Aorta (tissue), 5 donors: ENCODE measurements at regions of chr17 and their contacts with region 1.

Region 1: DNA sequence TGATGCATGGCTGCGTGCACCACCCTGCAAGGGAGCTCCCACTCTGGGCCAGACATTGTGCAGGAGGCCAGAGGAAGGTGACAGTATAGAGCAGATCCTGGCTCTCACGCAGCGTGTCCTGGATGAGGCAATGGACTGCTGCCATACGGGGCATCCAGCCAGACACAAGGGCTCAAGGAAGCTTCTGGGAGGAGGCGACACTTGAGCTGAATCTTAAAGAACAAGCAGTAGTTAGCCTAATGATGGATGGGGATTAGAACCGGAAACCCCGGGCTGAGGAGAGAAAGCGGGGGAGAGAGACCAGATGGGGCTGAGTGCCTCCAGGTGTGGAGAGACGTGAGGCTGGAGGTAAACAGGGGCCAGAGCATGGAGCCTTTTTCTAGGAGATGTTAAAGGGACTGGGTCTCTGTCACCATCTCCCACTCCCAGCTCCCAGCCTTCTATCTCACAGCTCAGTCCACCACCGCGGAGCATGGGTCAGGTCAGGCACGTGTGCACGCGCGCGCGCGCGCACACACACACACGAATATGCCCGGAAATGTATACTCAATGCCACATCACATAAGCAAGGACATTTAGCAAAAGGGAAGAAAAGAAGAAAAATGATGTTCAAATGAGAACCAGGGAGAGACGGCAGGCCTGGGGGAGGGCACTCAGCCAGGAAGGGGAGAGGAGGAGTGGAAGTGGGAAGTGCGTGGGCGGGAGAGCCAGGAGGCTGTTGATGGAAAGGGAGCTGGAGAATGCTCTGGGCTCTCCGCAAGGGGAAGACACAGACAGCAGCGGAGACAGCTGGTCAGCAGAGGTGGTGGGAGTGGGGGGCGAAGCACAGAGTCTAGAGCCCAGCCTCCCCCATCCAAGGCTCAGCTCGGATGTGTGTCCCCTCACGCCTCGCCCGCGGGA is 46.2 kb downstream of the CCDC42 start:
- DNase-seq: peak; percentile 85 to 92
- ATAC-seq: peak; percentile 62
- H3K4me3 ChIP-seq: no peak overlapping the region
- H3K27ac ChIP-seq: peak overlapping the region; percentile 64 to 96
- H3K4me1 ChIP-seq: peaks cover 0 to 2% of the 10 kb centered on the region in 2 donors
- H3K27me3 ChIP-seq: no peaks in the 10 kb centered on the region

Region 2: DNA sequence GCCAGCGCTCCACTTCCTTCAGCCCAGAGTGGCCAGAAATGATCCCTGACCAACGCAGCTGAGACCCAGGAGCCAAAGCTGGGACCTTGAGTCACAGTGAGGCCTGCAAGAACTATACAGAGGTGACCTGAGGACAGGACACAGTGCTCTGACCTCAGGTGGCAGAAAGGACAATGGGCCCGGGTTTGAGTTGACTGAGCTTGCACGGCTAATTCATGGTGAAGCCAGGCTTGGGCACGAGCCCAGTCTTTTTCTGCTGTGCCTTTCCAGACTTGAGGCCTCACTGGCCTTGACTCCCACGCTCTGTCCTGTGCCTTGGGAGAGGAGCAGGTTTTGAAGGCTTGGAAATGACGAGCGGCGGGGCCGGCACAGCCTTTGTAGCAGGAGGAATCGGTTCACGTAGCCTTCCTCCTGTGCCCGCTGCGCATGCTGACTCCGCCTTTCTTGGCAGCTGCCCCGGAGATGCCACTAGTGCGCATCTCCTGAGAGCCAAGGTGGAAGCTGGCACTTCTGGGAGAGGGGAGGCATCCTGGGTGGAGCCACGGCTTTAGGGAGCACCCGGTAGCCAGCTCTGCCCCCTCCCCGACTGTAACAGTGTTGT is 227.9 kb before region 1 on chr17:
- intact Hi-C with region 1: no loop called
- DNase-seq: peak; percentile 73 to 90
- ATAC-seq: peak; percentile 34
- H3K4me3 ChIP-seq: no peak overlapping the region
- H3K27ac ChIP-seq: peak overlapping the region in 1 of 2 donors; percentile 73
- H3K4me1 ChIP-seq: peaks cover 0 to 2% of the 10 kb centered on the region in 2 donors
- H3K27me3 ChIP-seq: no peaks in the 10 kb centered on the region

Region 3: GRCh38 chr17:8649157-8650118 is 49.0 kb before region 1 on chr17:
- intact Hi-C with region 1: loop called (anchors 2 to 5 kb)
- DNase-seq: peak; percentile 82 to 87
- ATAC-seq: peak; percentile 92
- H3K4me3 ChIP-seq: no peak overlapping the region
- H3K27ac ChIP-seq: peak overlapping the region; percentile 100
- H3K4me1 ChIP-seq: peaks cover 0 to 3% of the 10 kb centered on the region in 2 donors
- H3K27me3 ChIP-seq: no peaks in the 10 kb centered on the region

Region 4: DNA sequence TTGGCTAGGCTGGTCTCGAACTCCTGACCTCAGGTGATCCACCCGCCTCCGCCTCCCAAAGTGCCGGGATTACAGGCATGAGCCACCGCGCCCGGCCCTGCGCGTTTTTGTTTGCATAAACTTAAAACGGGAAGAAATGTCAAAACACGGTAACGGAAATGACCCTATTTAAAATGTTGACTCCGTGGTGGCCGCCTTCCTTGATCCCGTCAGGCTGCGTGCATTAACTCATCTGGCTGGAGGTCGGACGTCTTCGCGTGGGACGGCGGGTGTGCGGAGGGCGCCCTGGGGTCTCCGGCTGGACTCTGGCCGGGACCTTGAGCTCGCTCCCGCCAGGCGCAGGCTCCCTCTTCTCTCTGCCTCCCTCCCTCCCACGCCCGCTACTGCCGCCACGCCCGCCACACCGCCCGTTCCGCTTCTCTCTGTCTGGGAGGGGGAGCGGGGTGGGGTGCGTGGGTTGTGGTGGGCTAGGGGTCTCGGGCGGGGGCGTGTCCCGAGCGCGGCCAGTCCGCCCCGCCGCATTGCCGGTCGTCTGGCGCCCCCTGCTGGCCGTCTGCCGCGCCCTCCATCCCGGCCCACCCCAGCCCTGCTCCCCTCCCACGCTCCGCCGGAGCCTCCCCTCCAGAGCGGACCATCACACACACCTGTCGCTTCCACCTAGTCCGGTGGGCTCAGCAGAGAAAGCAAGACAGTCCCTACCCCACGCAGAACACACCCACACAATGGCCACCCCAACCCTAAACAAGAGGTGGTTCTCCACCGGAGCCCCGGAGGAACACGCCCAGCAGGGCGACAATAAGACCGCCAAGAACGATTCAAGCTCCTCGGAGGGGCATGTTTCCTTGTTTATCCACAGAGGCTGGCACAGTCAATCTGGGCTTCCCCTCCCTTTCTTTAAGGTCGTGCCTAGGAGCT is 47.4 kb after region 1 on chr17:
- intact Hi-C with region 1: loop called in 1 of 2 experiments (anchors 2 kb)
- DNase-seq: peak; percentile 89 to 96
- ATAC-seq: peak; percentile 93
- H3K4me3 ChIP-seq: peak overlapping the region; percentile 21 to 80
- H3K27ac ChIP-seq: peak overlapping the region; percentile 67 to 93
- H3K4me1 ChIP-seq: no peaks in the 10 kb centered on the region
- H3K27me3 ChIP-seq: no peaks in the 10 kb centered on the region